CD4-positive, alpha-beta T cell (primary cell): ENCODE measurements at regions of chr13 and their contacts with region 1.

Region 1: DNA sequence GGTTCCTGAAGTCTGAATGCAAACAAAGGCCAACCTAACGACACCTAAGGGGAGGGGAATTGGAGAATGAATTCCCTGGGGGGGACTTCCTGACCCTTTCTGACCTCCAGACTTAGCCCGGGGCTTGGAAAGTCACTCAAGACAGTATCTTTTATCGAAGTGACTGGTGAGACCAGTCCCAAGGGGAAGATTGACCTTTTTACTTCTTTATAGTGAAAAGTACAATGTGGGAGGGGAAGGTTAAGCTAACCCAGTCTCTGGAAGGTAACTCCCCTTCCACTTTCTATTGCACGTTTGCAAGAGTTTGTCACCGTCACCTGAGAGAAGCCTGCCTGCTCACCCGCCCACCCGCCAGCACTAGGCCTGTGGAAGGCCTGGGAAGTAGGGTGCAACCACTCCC is 111.9 kb downstream of the EFNB2 start:
- DNase-seq: no peak
- ATAC-seq: no peak
- H3K4me3 ChIP-seq: no peak overlapping the region
- H3K4me3 Mint-ChIP-seq: no peak overlapping the region
- H3K27ac ChIP-seq: no peak overlapping the region
- H3K27ac Mint-ChIP-seq: no peak overlapping the region
- H3K4me1 ChIP-seq: no peaks in the 10 kb centered on the region
- H3K4me1 Mint-ChIP-seq: no peaks in the 10 kb centered on the region
- H3K27me3 ChIP-seq: peaks cover 0 to 3% of the 10 kb centered on the region in 2 experiments
- H3K27me3 Mint-ChIP-seq: peaks cover 9% of the 10 kb centered on the region
- CTCF ChIP-seq: no peak

Region 2: GRCh38 chr13:106599875-106600797 is 176.6 kb after region 1 on chr13:
- CTCF ChIA-PET with region 1: no interaction called
- POLR2A ChIA-PET with region 1: no interaction called
- intact Hi-C with region 1: loop called in 1 of 2 experiments (anchors 5 kb)
- DNase-seq: peak in 3 of 14 experiments; percentile 9 to 34 (median 11)
- ATAC-seq: no peak
- H3K4me3 ChIP-seq: no peak overlapping the region
- H3K4me3 Mint-ChIP-seq: no peak overlapping the region
- H3K27ac ChIP-seq: no peak overlapping the region
- H3K27ac Mint-ChIP-seq: no peak overlapping the region
- H3K4me1 ChIP-seq: no peaks in the 10 kb centered on the region
- H3K4me1 Mint-ChIP-seq: peaks cover 18% of the 10 kb centered on the region
- H3K27me3 ChIP-seq: no peaks in the 10 kb centered on the region
- H3K27me3 Mint-ChIP-seq: peaks cover 17% of the 10 kb centered on the region
- CTCF ChIP-seq: no peak